Activated T-helper 1 cell treated with anti-CD3 and anti-CD28 coated beads, Interleukin-12 subunit alpha, Interleukin-12 subunit beta, Interleukin-2, Interleukin-4 antibody, amounts not matched to agents 30 ng/mL and 10 ng/mL and 1 ng/mL, durations not matched to agents 14 hours and 24 hours and 36 hours (primary cell): ENCODE measurements at regions of chr7 and their contacts with region 1.

Region 1: DNA sequence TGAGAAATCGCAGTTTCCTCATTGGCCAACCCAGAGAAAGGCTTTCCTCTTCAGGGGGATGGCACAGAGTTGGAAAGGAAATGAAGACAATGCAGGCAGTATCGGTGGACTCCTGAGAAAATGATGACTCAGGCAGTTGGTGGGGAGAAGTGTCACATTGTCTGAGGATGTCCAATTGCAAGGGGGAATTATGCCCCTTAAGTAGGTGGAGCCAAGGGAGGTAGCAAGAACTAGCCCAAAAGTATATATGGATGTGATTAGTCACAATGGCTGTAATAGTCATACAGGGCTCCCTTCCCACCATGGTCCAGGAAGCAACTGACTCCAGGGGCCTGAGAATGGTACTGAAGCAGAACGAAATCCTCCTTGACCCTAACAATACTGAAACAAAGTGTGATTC is 58.3 kb upstream of the EGFR start:
- DNase-seq: no peak
- H3K4me3 Mint-ChIP-seq: no peak overlapping the region
- H3K27ac Mint-ChIP-seq: no peak overlapping the region
- H3K4me1 Mint-ChIP-seq: no peaks in the 10 kb centered on the region
- H3K27me3 Mint-ChIP-seq: peaks cover 2% of the 10 kb centered on the region

Region 2: GRCh38 chr7:55026866-55027490 is 66.5 kb after region 1 on chr7:
- intact Hi-C with region 1: loop called (anchors 2 kb)
- DNase-seq: no peak
- H3K4me3 Mint-ChIP-seq: no peak overlapping the region
- H3K27ac Mint-ChIP-seq: no peak overlapping the region
- H3K4me1 Mint-ChIP-seq: no peaks in the 10 kb centered on the region
- H3K27me3 Mint-ChIP-seq: peaks cover 21% of the 10 kb centered on the region

Region 3: DNA sequence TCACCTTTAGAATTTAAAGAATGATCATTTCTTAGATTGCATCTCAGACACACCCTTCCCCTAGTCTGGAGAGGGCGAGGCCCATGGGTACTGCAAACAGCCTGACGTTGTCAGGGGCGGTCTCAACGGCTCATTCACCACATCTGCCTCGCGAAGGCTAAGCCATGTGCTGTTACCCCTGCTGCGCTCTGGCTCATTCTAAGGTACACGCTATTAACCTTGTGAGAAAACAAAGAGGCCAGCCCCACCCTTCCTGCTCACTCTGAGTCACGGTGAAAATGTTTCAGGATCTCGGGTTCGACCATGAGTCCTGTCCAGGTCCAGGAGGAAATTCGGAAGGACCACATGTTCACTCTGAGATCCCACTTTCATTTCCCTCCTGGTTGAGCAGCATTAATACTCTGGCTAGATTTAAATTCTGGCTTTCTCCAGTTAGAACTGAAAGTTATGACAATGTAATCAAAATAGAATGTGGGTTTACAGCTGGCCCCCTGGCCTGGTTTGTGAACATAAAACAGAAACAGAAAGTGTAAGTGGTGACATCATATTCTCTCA is 113.5 kb after region 1 on chr7:
- intact Hi-C with region 1: no loop called
- DNase-seq: peak; percentile 9
- H3K4me3 Mint-ChIP-seq: no peak overlapping the region
- H3K27ac Mint-ChIP-seq: peak overlapping the region; percentile 6
- H3K4me1 Mint-ChIP-seq: peaks cover 17% of the 10 kb centered on the region
- H3K27me3 Mint-ChIP-seq: peaks cover 12% of the 10 kb centered on the region